Sigmoid colon (tissue), 7 donors: ENCODE measurements at regions of chr1 and their contacts with region 1.

Region 1: DNA sequence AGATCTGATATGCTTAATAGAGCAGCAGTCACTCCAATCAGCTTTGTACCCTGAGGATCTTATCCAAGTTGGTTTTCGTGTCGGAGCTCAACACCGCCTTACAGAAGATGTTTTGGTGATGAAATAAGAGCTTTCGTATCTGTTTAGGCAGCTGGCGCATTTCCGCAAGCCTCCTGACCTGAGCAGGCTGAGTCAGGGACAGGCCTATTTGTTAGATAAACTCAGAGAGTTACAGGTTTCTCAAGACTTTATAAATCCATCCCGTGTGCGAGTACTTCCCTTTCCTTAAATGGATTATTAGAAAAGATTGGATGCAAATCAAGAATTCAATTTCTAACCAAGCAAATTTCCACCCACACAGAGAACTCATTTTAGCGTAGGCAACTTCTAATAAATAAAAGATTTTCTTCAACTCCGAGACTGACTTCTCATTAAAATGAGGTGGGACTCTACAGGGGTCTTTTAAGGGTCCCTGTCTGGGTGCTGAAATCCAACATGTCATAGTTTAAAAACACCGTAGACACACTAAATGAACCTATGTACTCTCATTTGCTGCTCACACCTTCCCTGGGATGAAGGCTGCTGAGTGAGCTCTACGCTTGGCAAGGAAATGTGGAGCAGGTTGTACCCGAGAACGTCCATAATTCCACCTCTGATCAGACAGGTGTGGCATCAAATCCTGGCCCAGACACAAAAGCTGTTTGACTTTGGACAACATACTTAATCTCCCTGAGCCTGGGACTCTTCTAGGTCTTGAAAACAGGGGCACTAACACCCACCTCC is 106.9 kb upstream of the F3 start:
- DNase-seq: peak; percentile 95
- H3K4me3 ChIP-seq: peak overlapping the region in 1 of 4 donors; percentile 1
- H3K27ac ChIP-seq: peak overlapping the region; percentile 61 to 77 (median 69)
- H3K4me1 ChIP-seq: peaks cover 0 to 37% (median 18%) of the 10 kb centered on the region in 4 donors
- H3K27me3 ChIP-seq: no peaks in the 10 kb centered on the region
- CTCF ChIP-seq: no peak
- EP300 ChIP-seq: peak in 3 of 4 donors; percentile 19 to 81 (median 37)
- POLR2A ChIP-seq: no peak

Region 2: DNA sequence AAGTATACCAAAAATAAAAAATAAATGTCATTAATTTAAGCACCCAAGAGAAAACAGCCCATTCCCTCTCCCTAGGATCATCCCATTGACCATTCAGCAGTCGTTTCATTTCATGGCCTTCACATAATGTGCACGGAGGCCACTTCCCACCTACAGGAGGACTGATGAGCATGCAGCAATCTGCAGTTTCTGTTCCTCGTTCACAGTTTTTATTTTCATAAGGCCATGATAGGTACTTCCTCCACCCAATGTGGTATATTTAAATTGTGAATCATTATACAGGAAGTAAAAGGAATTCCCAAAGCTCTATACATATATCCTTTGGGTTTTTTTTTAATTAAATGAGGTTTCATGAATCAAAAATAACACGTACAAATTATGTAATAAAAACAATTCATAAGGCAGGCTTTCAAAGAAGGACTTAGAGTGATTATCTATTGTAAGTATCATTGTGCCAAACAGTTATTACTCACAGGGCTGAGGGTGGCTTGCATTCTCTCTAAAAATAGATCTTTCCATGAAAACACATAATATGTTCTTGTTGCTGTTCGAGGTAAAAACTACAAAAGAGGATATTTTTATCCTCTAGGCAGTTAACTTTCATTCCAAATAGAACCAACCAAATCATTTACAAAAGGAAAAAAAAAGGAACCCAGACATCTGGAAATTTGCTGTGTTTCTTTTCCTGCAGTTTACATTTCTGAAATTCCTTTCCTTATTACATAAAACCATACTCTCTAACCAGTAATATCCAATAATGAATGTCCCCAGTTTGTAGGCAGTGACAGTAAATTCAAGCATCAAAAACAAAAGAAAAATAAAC is 144.3 kb after region 1 on chr1:
- intact Hi-C with region 1: loop called (anchors 5 kb)
- DNase-seq: peak; percentile 68
- H3K4me3 ChIP-seq: no peak overlapping the region
- H3K27ac ChIP-seq: peak overlapping the region; percentile 58 to 83 (median 70)
- H3K4me1 ChIP-seq: peaks cover 0 to 22% (median 21%) of the 10 kb centered on the region in 4 donors
- H3K27me3 ChIP-seq: no peaks in the 10 kb centered on the region
- CTCF ChIP-seq: peak; percentile 23 to 57 (median 37)
- EP300 ChIP-seq: no peak
- POLR2A ChIP-seq: no peak